ENCODE measurements at regions of chr17 and their contacts with region 1.

Region 1: DNA sequence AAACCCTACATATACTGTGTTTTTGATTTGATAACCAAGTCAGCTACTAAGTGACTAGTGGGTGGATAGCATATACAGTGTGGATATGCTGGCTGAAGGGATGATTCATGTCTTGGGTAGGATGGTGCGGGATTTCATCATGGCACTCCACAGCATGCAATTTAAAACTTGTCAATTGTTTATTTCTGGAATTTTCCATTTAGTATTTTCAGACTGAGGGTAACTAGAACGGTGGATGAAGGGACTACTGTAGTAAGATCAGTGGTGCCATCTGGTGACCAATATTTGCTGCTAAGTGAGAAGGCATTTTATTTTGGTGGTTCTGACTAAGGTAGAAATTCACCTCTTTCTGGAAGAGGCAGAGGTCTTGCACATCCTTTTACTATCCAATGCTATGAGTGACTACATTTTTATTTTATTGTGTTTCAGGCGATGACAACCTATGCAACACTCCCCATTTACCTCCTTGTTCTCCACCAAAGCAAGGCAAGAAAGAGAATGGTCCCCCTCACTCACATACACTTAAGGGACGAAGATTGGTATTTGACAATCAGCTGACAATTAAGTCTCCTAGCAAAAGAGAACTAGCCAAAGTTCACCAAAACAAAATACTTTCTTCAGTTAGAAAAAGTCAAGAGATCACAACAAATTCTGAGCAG is 3.1 kb downstream of the CDC6 start:
- DNase-seq: peak; percentile 54
- H3K4me3 ChIP-seq: no peak overlapping the region
- H3K27ac ChIP-seq: no peak overlapping the region
- H3K4me1 ChIP-seq: no peaks in the 10 kb centered on the region
- H3K27me3 ChIP-seq: no peaks in the 10 kb centered on the region
- CTCF ChIP-seq: peak; percentile 57

Region 2: GRCh38 chr17:40203131-40203530 is 87.6 kb before region 1 on chr17:
- intact Hi-C with region 1: loop called (anchors 2 kb)
- DNase-seq: no peak
- H3K4me3 ChIP-seq: no peak overlapping the region
- H3K27ac ChIP-seq: no peak overlapping the region
- H3K4me1 ChIP-seq: no peaks in the 10 kb centered on the region
- H3K27me3 ChIP-seq: no peaks in the 10 kb centered on the region
- CTCF ChIP-seq: no peak